ENCODE measurements at regions of chr3 and their contacts with region 1.

Region 1: GRCh38 chr3:184250167-184250828 is 826 bp downstream of the EEF1AKMT4 start:
- DNase-seq: peak; percentile 70 to 87 (median 83)
- ATAC-seq: peak; percentile 77
- H3K4me3 ChIP-seq: peak overlapping the region; percentile 100
- H3K4me3 Mint-ChIP-seq: peak overlapping the region; percentile 86 to 100 (median 96)
- H3K27ac ChIP-seq: peak overlapping the region; percentile 78
- H3K27ac Mint-ChIP-seq: peak overlapping the region in 8 of 9 donors; percentile 69 to 98 (median 96)
- H3K4me1 ChIP-seq: peaks cover 5 to 12% of the 10 kb centered on the region in 2 donors
- H3K4me1 Mint-ChIP-seq: peaks cover 5 to 22% (median 16%) of the 10 kb centered on the region in 7 donors
- H3K27me3 ChIP-seq: no peaks in the 10 kb centered on the region
- H3K27me3 Mint-ChIP-seq: no peaks in the 10 kb centered on the region

Region 2: GRCh38 chr3:183328823-183329222 is 921.5 kb before region 1 on chr3:
- CTCF ChIA-PET with region 1: no interaction called
- POLR2A ChIA-PET with region 1: no interaction called
- intact Hi-C with region 1: no loop called
- DNase-seq: no peak
- ATAC-seq: no peak
- H3K4me3 ChIP-seq: no peak overlapping the region
- H3K4me3 Mint-ChIP-seq: no peak overlapping the region
- H3K27ac ChIP-seq: no peak overlapping the region
- H3K27ac Mint-ChIP-seq: no peak overlapping the region
- H3K4me1 ChIP-seq: no peaks in the 10 kb centered on the region
- H3K4me1 Mint-ChIP-seq: peaks cover 0 to 15% (median 4%) of the 10 kb centered on the region in 7 donors
- H3K27me3 ChIP-seq: no peaks in the 10 kb centered on the region
- H3K27me3 Mint-ChIP-seq: peaks cover 0 to 11% (median 0%) of the 10 kb centered on the region in 5 donors

Region 3: DNA sequence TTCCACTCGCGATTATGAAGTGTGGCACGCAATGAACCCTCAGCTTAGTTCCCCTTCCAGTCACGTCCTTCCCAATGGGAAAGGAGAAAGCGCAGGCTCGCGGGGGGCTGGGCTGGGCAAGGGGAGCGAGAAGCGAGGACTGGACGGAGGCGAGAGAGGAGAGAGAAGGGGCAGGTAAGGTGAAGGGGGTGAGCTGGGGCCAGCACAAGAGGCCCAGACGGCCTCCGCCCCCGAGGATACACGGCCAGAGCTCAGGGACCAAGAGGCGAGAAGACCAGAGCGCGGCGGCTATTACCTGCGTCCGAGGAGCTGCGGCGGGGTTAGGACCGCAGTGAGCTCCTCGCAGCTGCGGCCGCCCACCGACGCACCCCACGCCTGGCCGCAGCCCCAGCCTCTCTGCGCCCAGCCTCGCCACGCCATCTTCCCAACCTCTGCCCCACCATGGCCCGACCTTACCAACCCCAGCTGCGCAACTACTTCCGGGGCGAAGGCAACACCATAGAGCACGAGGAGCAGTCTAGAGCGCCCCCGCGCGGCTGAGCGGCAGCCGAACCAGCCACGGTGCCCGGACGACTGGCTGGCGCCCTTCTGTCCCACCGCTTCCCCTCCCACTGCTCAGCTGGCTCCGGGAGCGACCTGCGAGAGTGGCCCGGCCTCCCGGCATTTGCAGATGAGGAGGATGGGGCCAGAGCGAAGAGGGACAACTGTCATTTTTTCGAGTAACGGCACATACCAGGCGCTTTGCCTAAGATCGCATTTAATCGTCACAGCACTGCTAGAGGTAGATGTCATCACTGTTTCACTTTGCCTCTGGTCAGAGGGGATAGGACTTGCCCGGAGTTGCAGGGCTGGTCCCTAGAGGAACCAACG is 365.6 kb before region 1 on chr3 and contains the start of gene PARL:
- CTCF ChIA-PET with region 1: no interaction called
- POLR2A ChIA-PET with region 1: no interaction called
- intact Hi-C with region 1: loop called (anchors 1 to 2 kb)
- DNase-seq: peak; percentile 88 to 99 (median 95)
- ATAC-seq: peak; percentile 100
- H3K4me3 ChIP-seq: peak within 1 kb of the TSS; percentile 85
- H3K4me3 Mint-ChIP-seq: peak within 1 kb of the TSS; percentile 89 to 98 (median 96)
- H3K27ac ChIP-seq: peak within 1 kb of the TSS; percentile 77
- H3K27ac Mint-ChIP-seq: peak within 1 kb of the TSS; percentile 86 to 96 (median 93)
- H3K4me1 ChIP-seq: peaks cover 15% of the 10 kb centered on the region in 2 donors
- H3K4me1 Mint-ChIP-seq: peaks cover 15 to 53% (median 41%) of the 10 kb centered on the region in 7 donors
- H3K27me3 ChIP-seq: no peaks in the 10 kb centered on the region
- H3K27me3 Mint-ChIP-seq: peaks cover 0 to 3% (median 0%) of the 10 kb centered on the region in 5 donors
- total RNA-seq, gene PARL: 41.6 to 50.4 (median 47.1) TPM

Region 4: GRCh38 chr3:184039414-184039813 is 210.9 kb before region 1 on chr3:
- CTCF ChIA-PET with region 1: no interaction called
- POLR2A ChIA-PET with region 1: no interaction called
- intact Hi-C with region 1: loop called in 1 of 2 experiments (anchors 5 kb)
- DNase-seq: no peak
- ATAC-seq: no peak
- H3K4me3 ChIP-seq: no peak overlapping the region
- H3K4me3 Mint-ChIP-seq: no peak overlapping the region
- H3K27ac ChIP-seq: no peak overlapping the region
- H3K27ac Mint-ChIP-seq: no peak overlapping the region
- H3K4me1 ChIP-seq: no peaks in the 10 kb centered on the region
- H3K4me1 Mint-ChIP-seq: no peaks in the 10 kb centered on the region
- H3K27me3 ChIP-seq: no peaks in the 10 kb centered on the region
- H3K27me3 Mint-ChIP-seq: no peaks in the 10 kb centered on the region

Region 5: GRCh38 chr3:184154885-184155643 is 95.2 kb before region 1 on chr3 and contains the start of gene DVL3:
- CTCF ChIA-PET with region 1: no interaction called
- POLR2A ChIA-PET with region 1: no interaction called
- intact Hi-C with region 1: loop called in 1 of 2 experiments (anchors 2 kb)
- DNase-seq: peak in 7 of 9 donors; percentile 31 to 75 (median 39)
- ATAC-seq: peak; percentile 82
- H3K4me3 ChIP-seq: peak within 1 kb of the TSS; percentile 84
- H3K4me3 Mint-ChIP-seq: peak within 1 kb of the TSS; percentile 94 to 100 (median 96)
- H3K27ac ChIP-seq: peak within 1 kb of the TSS; percentile 60
- H3K27ac Mint-ChIP-seq: peak within 1 kb of the TSS; percentile 81 to 91 (median 87)
- H3K4me1 ChIP-seq: peaks cover 10 to 13% of the 10 kb centered on the region in 2 donors
- H3K4me1 Mint-ChIP-seq: peaks cover 14 to 39% (median 28%) of the 10 kb centered on the region in 7 donors
- H3K27me3 ChIP-seq: no peaks in the 10 kb centered on the region
- H3K27me3 Mint-ChIP-seq: no peaks in the 10 kb centered on the region
- total RNA-seq, gene DVL3: 32.0 to 45.3 (median 39.4) TPM

Region 6: GRCh38 chr3:184229394-184230080 is 20.8 kb before region 1 on chr3 and contains the start of gene VWA5B2:
- CTCF ChIA-PET with region 1: interaction called, 40 read pairs
- POLR2A ChIA-PET with region 1: no interaction called
- intact Hi-C with region 1: loop called (anchors 1 kb)
- DNase-seq: peak; percentile 58 to 72 (median 66)
- ATAC-seq: peak; percentile 96
- H3K4me3 ChIP-seq: peak within 1 kb of the TSS; percentile 58
- H3K4me3 Mint-ChIP-seq: peak within 1 kb of the TSS; percentile 41 to 82 (median 74)
- H3K27ac ChIP-seq: no peak within 1 kb of the TSS
- H3K27ac Mint-ChIP-seq: no peak within 1 kb of the TSS
- H3K4me1 ChIP-seq: peaks cover 0 to 5% of the 10 kb centered on the region in 2 donors
- H3K4me1 Mint-ChIP-seq: peaks cover 8 to 14% (median 10%) of the 10 kb centered on the region in 7 donors
- H3K27me3 ChIP-seq: peaks cover 4 to 17% of the 10 kb centered on the region in 2 donors
- H3K27me3 Mint-ChIP-seq: peaks cover 46 to 65% (median 57%) of the 10 kb centered on the region in 5 donors
- total RNA-seq, gene VWA5B2: not detected

Region 7: DNA sequence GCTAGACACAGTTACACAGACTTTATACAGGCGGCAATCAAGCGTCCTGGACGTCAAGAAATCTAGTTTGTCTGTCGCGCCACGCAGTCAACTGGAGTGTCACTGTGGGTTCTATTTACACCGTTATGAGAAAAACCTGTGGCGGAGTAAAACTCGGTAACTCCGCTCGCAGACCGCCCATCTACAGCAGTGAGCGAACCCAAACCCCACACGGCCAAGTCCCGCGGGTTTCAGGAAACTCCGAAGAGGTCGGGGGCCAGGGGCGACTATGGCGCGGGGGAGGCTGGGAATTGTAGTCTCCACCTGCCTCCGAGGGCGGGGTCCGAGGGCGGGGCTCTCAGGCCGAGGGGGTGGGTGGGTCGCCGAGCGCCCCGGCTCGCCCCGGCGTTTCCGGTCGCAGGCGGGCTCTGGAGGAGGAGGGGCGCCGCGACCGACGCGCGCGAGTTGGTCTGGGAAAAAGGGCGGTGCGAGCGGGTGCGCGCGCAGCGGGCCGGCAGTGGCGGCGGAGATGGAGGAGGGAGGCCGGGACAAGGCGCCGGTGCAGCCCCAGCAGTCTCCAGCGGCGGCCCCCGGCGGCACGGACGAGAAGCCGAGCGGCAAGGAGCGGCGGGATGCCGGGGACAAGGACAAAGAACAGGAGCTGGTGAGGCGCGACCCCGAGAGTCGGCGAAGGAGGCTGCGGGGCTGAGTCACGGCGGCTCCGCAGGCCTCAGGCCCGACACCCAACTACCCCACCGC is 48.6 kb after region 1 on chr3 and contains the start of gene PSMD2:
- CTCF ChIA-PET with region 1: interaction called, 3 read pairs
- POLR2A ChIA-PET with region 1: interaction called, 3 read pairs
- intact Hi-C with region 1: loop called (anchors 1 kb)
- DNase-seq: peak; percentile 93 to 97 (median 96)
- ATAC-seq: peak; percentile 98
- H3K4me3 ChIP-seq: peak within 1 kb of the TSS; percentile 74
- H3K4me3 Mint-ChIP-seq: peak within 1 kb of the TSS; percentile 89 to 97 (median 94)
- H3K27ac ChIP-seq: peak within 1 kb of the TSS; percentile 80
- H3K27ac Mint-ChIP-seq: peak within 1 kb of the TSS; percentile 85 to 97 (median 92)
- H3K4me1 ChIP-seq: peaks cover 12 to 15% of the 10 kb centered on the region in 2 donors
- H3K4me1 Mint-ChIP-seq: peaks cover 15 to 37% (median 25%) of the 10 kb centered on the region in 7 donors
- H3K27me3 ChIP-seq: no peaks in the 10 kb centered on the region
- H3K27me3 Mint-ChIP-seq: peaks cover 0 to 8% (median 0%) of the 10 kb centered on the region in 5 donors
- total RNA-seq, gene PSMD2: 139 to 204 (median 149) TPM

Region 8: DNA sequence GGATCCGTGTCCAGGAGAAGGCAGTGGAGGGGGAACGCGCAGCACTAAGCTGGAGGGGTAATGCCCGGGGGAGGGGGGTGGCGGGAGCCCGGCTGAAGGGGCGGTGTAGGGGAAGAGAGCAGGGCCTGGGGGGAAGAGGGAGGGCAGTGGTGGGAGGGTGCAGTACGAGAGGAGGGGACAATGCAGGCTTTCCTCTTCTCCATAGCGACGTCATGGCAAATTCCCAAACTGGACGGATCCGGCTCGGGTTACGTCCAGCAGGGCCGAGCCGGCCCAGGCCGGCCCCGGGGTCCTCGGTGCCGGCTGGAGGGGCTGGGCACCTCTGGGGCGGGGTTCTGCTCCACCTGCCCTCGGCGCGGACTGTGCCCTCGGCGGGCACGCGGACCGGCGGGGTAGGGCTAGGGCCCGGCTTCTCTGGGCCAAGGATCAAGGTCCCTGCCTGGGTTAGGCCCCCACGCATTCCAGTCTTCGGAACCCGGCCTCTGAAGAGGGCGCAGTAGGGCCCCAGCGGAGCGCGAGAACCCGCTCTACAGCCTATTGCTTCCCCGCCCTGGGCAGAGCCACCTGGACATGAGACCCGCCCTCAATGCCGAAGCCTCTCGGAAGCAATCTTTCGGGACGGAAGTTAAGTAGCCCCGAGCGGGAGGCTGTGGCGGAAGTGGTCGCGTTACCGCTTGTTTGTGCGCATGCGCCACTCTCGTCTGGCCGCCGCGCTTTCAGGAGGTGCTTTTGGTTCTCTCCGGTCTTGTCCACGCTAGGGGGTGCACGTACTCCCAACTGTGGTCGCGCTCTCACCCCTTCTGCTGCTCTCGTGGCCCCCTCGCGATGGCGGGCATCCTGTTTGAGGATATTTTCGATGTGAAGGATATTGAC is 112.6 kb after region 1 on chr3:
- CTCF ChIA-PET with region 1: no interaction called
- POLR2A ChIA-PET with region 1: no interaction called
- intact Hi-C with region 1: loop called (anchors 1 kb)
- DNase-seq: peak; percentile 74 to 94 (median 90)
- ATAC-seq: peak; percentile 87
- H3K4me3 ChIP-seq: peak overlapping the region; percentile 97
- H3K4me3 Mint-ChIP-seq: peak overlapping the region; percentile 95 to 100 (median 99)
- H3K27ac ChIP-seq: peak overlapping the region; percentile 84
- H3K27ac Mint-ChIP-seq: peak overlapping the region; percentile 91 to 98 (median 97)
- H3K4me1 ChIP-seq: peaks cover 11 to 13% of the 10 kb centered on the region in 2 donors
- H3K4me1 Mint-ChIP-seq: peaks cover 25 to 37% (median 30%) of the 10 kb centered on the region in 7 donors
- H3K27me3 ChIP-seq: no peaks in the 10 kb centered on the region
- H3K27me3 Mint-ChIP-seq: peaks cover 0 to 13% (median 0%) of the 10 kb centered on the region in 5 donors

Region 9: DNA sequence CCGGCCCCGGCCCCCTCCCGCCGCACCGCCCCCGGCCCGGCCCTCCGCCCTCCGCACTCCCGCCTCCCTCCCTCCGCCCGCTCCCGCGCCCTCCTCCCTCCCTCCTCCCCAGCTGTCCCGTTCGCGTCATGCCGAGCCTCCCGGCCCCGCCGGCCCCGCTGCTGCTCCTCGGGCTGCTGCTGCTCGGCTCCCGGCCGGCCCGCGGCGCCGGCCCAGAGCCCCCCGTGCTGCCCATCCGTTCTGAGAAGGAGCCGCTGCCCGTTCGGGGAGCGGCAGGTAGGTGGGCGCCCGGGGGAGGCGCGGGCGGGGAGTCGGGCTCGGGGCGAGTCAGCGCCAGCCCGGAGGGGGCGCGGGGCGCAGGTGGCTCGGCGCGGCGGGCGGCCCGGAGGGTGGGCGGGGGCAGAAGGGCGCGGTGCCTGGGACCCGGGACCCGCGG is 129.9 kb after region 1 on chr3:
- CTCF ChIA-PET with region 1: no interaction called
- POLR2A ChIA-PET with region 1: no interaction called
- intact Hi-C with region 1: no loop called
- DNase-seq: peak in 1 of 9 donors; percentile 18
- ATAC-seq: peak; percentile 31
- H3K4me3 ChIP-seq: no peak overlapping the region
- H3K4me3 Mint-ChIP-seq: peak overlapping the region in 2 of 10 donors; percentile 80 to 81
- H3K27ac ChIP-seq: no peak overlapping the region
- H3K27ac Mint-ChIP-seq: no peak overlapping the region
- H3K4me1 ChIP-seq: peaks cover 4 to 5% of the 10 kb centered on the region in 2 donors
- H3K4me1 Mint-ChIP-seq: peaks cover 0 to 15% (median 8%) of the 10 kb centered on the region in 7 donors
- H3K27me3 ChIP-seq: peaks cover 0 to 9% of the 10 kb centered on the region in 2 donors
- H3K27me3 Mint-ChIP-seq: peaks cover 38 to 82% (median 47%) of the 10 kb centered on the region in 5 donors

Region 10: GRCh38 chr3:184604039-184604601 is 353.8 kb after region 1 on chr3:
- CTCF ChIA-PET with region 1: no interaction called
- POLR2A ChIA-PET with region 1: no interaction called
- intact Hi-C with region 1: no loop called
- DNase-seq: no peak
- ATAC-seq: no peak
- H3K4me3 ChIP-seq: no peak overlapping the region
- H3K4me3 Mint-ChIP-seq: peak overlapping the region in 9 of 10 donors; percentile 44 to 79 (median 64)
- H3K27ac ChIP-seq: no peak overlapping the region
- H3K27ac Mint-ChIP-seq: no peak overlapping the region
- H3K4me1 ChIP-seq: peaks cover 18 to 27% of the 10 kb centered on the region in 2 donors
- H3K4me1 Mint-ChIP-seq: peaks cover 16 to 64% (median 44%) of the 10 kb centered on the region in 7 donors
- H3K27me3 ChIP-seq: peaks cover 23 to 27% of the 10 kb centered on the region in 2 donors
- H3K27me3 Mint-ChIP-seq: peaks cover 41 to 68% (median 58%) of the 10 kb centered on the region in 5 donors